ENCODE measurements at regions of chr2 and their contacts with region 1.

Region 1: DNA sequence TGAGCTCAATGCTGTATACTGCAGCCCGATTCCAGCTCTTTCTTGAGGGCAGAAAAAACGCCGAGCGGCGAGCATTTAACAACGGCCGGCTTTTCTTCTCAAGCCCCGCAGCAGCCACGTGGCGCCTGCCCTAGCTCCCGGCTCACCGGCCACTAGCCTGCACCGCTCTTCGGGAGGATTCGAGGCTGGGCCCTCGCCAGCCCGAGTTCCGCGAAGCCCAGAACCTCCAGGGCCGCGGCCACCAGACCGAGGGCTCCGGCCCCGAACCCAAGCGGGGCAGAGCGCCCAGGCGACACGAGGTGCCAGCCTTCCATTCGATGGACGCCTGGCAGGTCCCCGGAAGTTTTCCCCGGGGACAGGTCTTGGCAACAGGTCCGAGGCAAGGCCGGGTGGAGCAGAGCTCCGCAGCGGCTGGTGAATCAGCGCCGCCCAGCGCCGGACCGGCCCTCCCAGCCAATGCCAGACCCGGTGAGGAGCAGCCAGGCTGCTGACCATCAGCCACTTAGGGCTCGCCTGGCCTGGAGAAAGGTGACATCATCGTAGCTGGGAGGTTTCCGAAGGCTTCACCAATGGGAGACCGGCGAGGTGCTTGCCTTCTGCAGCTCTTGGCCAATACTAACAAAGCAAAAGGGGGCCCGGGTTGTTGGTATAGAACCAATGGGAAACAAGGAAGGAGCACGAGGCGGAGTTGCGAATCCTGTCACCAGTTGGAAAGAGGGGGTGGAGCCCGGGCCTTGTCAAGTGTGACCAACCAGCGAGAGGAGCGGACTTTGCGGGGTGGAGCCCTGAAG is 544 bp upstream of the MXD1 start:
- DNase-seq: peak; percentile 100
- ATAC-seq: peak; percentile 93
- H3K4me3 ChIP-seq: peak overlapping the region; percentile 73 to 80
- H3K27ac ChIP-seq: peak overlapping the region; percentile 89
- H3K4me1 ChIP-seq: peaks cover 20% of the 10 kb centered on the region
- H3K27me3 ChIP-seq: no peaks in the 10 kb centered on the region
- CTCF ChIP-seq: peak; percentile 47; the same call in 1 of the 2 replicates

Region 2: GRCh38 chr2:68987021-68987503 is 927.3 kb before region 1 on chr2:
- CTCF ChIA-PET with region 1: no interaction called
- POLR2A ChIA-PET with region 1: no interaction called
- in situ Hi-C with region 1: no loop called
- intact Hi-C with region 1: no loop called
- DNase-seq: no peak
- ATAC-seq: no peak
- H3K4me3 ChIP-seq: no peak overlapping the region
- H3K27ac ChIP-seq: no peak overlapping the region
- H3K4me1 ChIP-seq: no peaks in the 10 kb centered on the region
- H3K27me3 ChIP-seq: no peaks in the 10 kb centered on the region
- CTCF ChIP-seq: no peak

Region 3: GRCh38 chr2:70142590-70143313 is 228.4 kb after region 1 on chr2:
- CTCF ChIA-PET with region 1: interaction called, 6 read pairs
- POLR2A ChIA-PET with region 1: interaction called, 15 read pairs
- in situ Hi-C with region 1: no loop called
- intact Hi-C with region 1: loop called (anchors 5 kb)
- DNase-seq: peak; percentile 95
- ATAC-seq: peak; percentile 89
- H3K4me3 ChIP-seq: peak overlapping the region; percentile 30 to 46
- H3K27ac ChIP-seq: peak overlapping the region; percentile 99
- H3K4me1 ChIP-seq: peaks cover 21% of the 10 kb centered on the region
- H3K27me3 ChIP-seq: no peaks in the 10 kb centered on the region
- CTCF ChIP-seq: peak; percentile 98

Measured in Panc1 (cell line).